Activated T-helper 2 cell treated with anti-CD3 and anti-CD28 coated beads, Interferon-gamma antibody, Interleukin-2, Interleukin-4, amounts not matched to agents 10 μg/mL and 5 μg/mL and 100 μg/mL, durations not matched to agents 14 hours and 24 hours and 36 hours (primary cell): ENCODE measurements at regions of chr18 and their contacts with region 1.

Region 1: GRCh38 chr18:59988098-59988706 is 88.4 kb downstream of the PMAIP1 start:
- DNase-seq: no peak
- H3K4me3 Mint-ChIP-seq: no peak overlapping the region
- H3K27ac Mint-ChIP-seq: no peak overlapping the region
- H3K4me1 Mint-ChIP-seq: no peaks in the 10 kb centered on the region
- H3K27me3 Mint-ChIP-seq: peaks cover 27% of the 10 kb centered on the region

Region 2: GRCh38 chr18:59837586-59837985 is 150.6 kb before region 1 on chr18:
- intact Hi-C with region 1: loop called (anchors 1 kb)
- DNase-seq: peak; percentile 25
- H3K4me3 Mint-ChIP-seq: no peak overlapping the region
- H3K27ac Mint-ChIP-seq: no peak overlapping the region
- H3K4me1 Mint-ChIP-seq: peaks cover 7% of the 10 kb centered on the region
- H3K27me3 Mint-ChIP-seq: peaks cover 16% of the 10 kb centered on the region

Region 3: DNA sequence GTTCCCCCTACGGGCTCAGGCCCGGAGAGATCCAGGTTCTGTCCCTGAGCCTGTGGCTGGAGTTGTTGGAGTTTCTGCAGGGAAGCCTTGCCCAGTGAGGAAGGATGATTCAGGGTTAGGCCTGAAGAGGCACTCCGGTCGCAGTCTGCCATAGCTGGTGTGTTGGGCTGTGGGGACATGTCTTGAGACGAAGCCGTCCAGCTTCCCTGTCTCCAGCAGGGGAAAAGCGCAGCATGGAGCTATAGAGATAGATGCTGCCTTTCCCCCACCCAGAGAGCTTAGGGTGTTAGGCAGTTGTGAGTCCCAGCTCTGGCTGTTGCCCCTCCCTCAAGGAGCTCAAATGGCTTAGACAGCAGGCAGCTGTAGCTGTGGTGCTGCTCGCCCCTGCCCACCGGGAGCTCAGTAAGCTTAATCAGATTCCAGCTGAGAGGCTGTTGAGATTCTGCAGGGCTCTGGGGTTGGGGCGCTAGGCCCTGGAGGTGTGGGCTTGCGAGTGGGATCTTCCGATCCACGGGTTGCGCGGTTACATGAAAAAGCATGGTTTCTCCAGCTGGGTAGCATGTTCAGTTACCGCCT is 15.5 kb after region 1 on chr18:
- intact Hi-C with region 1: no loop called
- DNase-seq: no peak
- H3K4me3 Mint-ChIP-seq: no peak overlapping the region
- H3K27ac Mint-ChIP-seq: no peak overlapping the region
- H3K4me1 Mint-ChIP-seq: no peaks in the 10 kb centered on the region
- H3K27me3 Mint-ChIP-seq: peaks cover 23% of the 10 kb centered on the region

Region 4: DNA sequence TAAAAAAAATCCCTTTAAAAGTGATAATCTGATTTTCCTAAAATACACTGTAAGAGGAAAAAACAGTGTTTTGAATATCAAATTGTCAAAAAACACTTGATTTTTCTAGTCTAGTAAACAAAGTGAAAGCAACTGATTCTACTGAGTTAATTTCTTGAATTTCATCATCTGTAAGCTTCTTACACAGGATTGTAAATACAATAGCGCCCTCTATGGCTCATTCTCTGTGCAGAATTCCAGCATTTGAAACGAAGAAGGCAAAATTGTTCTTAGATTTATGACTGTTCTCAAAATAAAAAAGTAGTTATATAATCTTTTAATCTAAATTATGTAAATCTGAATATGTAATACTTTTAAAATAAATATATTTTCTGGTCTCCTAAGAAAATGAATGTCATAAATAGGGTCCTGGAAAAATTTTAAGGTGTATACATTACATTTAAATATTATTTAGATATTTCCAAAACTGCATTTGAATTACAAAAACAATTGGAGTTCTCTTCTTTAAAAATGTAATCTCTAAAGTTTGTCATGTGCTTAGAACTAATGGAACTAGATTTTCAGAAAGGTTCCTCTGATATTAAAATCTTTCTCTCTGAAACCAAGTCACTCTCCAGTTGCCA is 561.2 kb after region 1 on chr18:
- intact Hi-C with region 1: loop called (anchors 1 kb)
- DNase-seq: no peak
- H3K4me3 Mint-ChIP-seq: no peak overlapping the region
- H3K27ac Mint-ChIP-seq: no peak overlapping the region
- H3K4me1 Mint-ChIP-seq: no peaks in the 10 kb centered on the region
- H3K27me3 Mint-ChIP-seq: no peaks in the 10 kb centered on the region